CD8-positive, alpha-beta T cell (primary cell): ENCODE measurements at regions of chr17 and their contacts with region 1.

Region 1: DNA sequence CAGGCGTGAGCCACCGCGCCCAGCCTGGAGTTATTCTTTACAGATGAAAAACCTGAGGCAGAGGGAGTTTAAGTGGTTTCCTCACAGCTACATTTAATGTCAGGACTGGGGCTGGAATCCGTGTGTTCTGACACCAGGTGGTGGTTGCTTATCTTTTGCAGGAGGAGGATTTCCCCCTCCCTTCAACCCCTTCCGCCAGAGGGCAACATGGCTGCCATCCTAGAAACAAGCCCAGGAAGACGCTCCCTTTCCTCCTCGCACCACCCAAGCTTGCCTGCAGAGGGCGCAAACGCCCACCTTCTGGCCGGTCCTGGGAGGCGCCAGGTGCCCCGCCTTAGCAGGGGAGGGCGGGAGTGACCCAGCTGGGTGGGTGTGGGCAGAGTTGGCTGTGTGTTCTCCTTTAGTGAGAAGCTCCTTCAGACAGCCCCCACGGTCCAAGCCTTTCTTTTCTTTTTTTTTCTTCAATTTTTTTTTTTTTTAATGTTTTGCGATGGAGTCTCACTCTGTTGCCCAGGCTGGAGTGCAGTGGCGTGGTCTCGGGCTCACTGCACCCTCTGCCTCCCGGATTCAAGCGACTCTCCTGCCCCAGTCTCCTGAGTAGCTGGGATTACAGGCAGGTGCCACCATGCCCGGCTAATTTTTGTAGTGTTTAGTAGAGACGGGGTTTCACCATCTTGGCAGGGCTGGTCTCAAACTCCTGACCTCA is 9.9 kb upstream of the RAP1GAP2 start:
- DNase-seq: peak; percentile 80 to 94 (median 91)
- ATAC-seq: peak; percentile 98
- H3K4me3 ChIP-seq: no peak overlapping the region
- H3K4me3 Mint-ChIP-seq: no peak overlapping the region
- H3K27ac ChIP-seq: no peak overlapping the region
- H3K27ac Mint-ChIP-seq: no peak overlapping the region
- H3K4me1 ChIP-seq: peaks cover 18% of the 10 kb centered on the region
- H3K4me1 Mint-ChIP-seq: peaks cover 10% of the 10 kb centered on the region
- H3K27me3 ChIP-seq: no peaks in the 10 kb centered on the region
- H3K27me3 Mint-ChIP-seq: peaks cover 2% of the 10 kb centered on the region
- CTCF ChIP-seq: peak; percentile 88

Region 2: DNA sequence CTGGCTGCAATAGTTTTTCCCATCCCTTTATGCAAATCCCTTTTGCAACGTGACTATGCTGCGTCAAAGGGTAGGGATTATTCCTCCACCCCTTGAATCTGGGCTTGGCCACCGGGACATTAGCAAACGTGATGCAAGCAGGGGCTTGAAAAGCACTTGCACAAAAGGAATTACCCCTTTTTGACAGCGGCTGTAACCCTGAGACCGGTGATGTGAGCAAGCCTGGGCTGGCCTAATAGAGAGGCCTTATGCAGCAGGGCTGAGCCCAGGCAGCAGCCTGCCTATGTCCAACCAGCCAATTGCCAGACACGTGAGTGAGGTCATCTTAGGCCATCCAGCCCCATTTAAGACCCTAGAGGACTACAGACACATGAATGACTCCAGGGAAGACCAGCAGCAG is 223.3 kb before region 1 on chr17:
- CTCF ChIA-PET with region 1: no interaction called
- POLR2A ChIA-PET with region 1: no interaction called
- intact Hi-C with region 1: no loop called
- DNase-seq: no peak
- ATAC-seq: no peak
- H3K4me3 ChIP-seq: no peak overlapping the region
- H3K4me3 Mint-ChIP-seq: no peak overlapping the region
- H3K27ac ChIP-seq: no peak overlapping the region
- H3K27ac Mint-ChIP-seq: no peak overlapping the region
- H3K4me1 ChIP-seq: peaks cover 7% of the 10 kb centered on the region
- H3K4me1 Mint-ChIP-seq: peaks cover 11% of the 10 kb centered on the region
- H3K27me3 ChIP-seq: no peaks in the 10 kb centered on the region
- H3K27me3 Mint-ChIP-seq: peaks cover 3% of the 10 kb centered on the region
- CTCF ChIP-seq: no peak

Region 3: GRCh38 chr17:2713881-2714280 is 72.4 kb before region 1 on chr17:
- CTCF ChIA-PET with region 1: no interaction called
- POLR2A ChIA-PET with region 1: no interaction called
- intact Hi-C with region 1: no loop called
- DNase-seq: no peak
- ATAC-seq: no peak
- H3K4me3 ChIP-seq: no peak overlapping the region
- H3K4me3 Mint-ChIP-seq: no peak overlapping the region
- H3K27ac ChIP-seq: no peak overlapping the region
- H3K27ac Mint-ChIP-seq: no peak overlapping the region
- H3K4me1 ChIP-seq: peaks cover 29% of the 10 kb centered on the region
- H3K4me1 Mint-ChIP-seq: peaks cover 27% of the 10 kb centered on the region
- H3K27me3 ChIP-seq: no peaks in the 10 kb centered on the region
- H3K27me3 Mint-ChIP-seq: no peaks in the 10 kb centered on the region
- CTCF ChIP-seq: no peak

Region 4: DNA sequence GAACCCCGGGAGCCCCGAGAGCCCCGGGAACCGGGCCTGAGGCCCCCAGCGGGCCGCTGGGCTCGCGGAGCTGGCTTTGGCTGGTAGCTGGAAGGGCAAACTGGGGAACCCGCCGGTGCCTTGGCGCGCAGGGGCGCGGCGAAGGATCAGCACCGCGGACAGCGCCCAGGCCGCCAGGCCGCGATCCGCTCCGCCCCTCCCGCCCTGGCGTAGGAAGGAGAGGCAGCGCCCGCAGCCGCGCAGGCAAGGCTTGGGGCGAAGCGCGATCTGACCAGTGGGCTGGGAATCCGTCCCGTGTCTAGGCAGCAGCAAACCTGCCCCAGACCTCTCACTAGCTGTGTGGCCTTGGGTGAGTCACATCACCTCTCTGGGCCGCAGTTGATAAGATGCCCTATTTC is 36.5 kb before region 1 on chr17:
- CTCF ChIA-PET with region 1: no interaction called
- POLR2A ChIA-PET with region 1: no interaction called
- intact Hi-C with region 1: loop called in 1 of 2 experiments (anchors 2 kb)
- DNase-seq: peak; percentile 55 to 84 (median 65)
- ATAC-seq: peak; percentile 98
- H3K4me3 ChIP-seq: no peak overlapping the region
- H3K4me3 Mint-ChIP-seq: no peak overlapping the region
- H3K27ac ChIP-seq: no peak overlapping the region
- H3K27ac Mint-ChIP-seq: no peak overlapping the region
- H3K4me1 ChIP-seq: no peaks in the 10 kb centered on the region
- H3K4me1 Mint-ChIP-seq: peaks cover 1% of the 10 kb centered on the region
- H3K27me3 ChIP-seq: peaks cover 5 to 7% of the 10 kb centered on the region in 2 experiments
- H3K27me3 Mint-ChIP-seq: peaks cover 47% of the 10 kb centered on the region
- CTCF ChIP-seq: no peak

Region 5: DNA sequence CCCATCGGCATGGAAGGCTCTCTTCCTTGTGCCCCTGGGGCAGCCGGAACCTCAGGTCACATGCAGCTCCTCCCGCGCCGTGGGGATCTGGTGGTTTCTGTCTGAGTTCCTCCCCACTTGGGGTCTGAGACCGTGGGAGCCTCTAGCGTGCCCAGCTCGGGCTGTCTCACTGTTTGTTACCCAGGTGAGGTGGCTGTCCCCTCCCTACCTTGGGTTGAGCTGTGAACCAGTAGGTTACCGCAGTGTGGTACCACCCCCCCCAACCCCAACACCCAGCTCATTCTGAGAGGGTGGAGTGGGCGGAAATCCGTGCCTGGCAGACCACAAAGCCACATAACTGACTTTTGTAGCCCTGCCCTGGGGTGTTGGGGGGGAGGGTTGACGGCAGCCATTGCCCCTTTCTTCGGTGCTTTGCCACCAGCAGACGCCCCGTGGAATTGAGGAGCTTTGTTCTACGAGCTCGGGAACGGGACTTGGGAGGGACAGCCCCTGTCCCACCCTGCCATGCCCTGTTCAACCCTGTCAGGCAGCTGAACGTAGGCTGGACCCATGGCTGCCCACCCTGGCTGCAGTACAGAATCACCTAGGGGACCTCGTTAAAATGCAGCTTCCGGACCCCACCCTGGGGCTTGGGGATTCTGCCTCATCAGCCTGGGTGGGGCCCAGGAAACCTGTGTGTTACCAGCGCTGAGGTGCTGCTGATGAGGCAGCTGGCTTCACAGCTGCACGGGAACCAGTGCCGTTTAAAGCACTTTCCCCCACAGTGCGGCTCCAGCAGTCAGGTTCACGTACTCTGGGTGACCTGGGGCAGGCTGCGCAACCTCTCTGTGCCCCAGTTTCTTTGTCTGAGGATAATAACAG is 28.4 kb after region 1 on chr17:
- CTCF ChIA-PET with region 1: interaction called, 20 read pairs
- POLR2A ChIA-PET with region 1: interaction called, 46 read pairs
- intact Hi-C with region 1: loop called (anchors 1 kb)
- DNase-seq: peak; percentile 88 to 98 (median 96)
- ATAC-seq: peak; percentile 77
- H3K4me3 ChIP-seq: peak overlapping the region; percentile 52 to 64
- H3K4me3 Mint-ChIP-seq: peak overlapping the region; percentile 79
- H3K27ac ChIP-seq: peak overlapping the region; percentile 66 to 76
- H3K27ac Mint-ChIP-seq: peak overlapping the region; percentile 94
- H3K4me1 ChIP-seq: peaks cover 34% of the 10 kb centered on the region
- H3K4me1 Mint-ChIP-seq: peaks cover 31% of the 10 kb centered on the region
- H3K27me3 ChIP-seq: no peaks in the 10 kb centered on the region
- H3K27me3 Mint-ChIP-seq: no peaks in the 10 kb centered on the region
- CTCF ChIP-seq: no peak

Region 6: DNA sequence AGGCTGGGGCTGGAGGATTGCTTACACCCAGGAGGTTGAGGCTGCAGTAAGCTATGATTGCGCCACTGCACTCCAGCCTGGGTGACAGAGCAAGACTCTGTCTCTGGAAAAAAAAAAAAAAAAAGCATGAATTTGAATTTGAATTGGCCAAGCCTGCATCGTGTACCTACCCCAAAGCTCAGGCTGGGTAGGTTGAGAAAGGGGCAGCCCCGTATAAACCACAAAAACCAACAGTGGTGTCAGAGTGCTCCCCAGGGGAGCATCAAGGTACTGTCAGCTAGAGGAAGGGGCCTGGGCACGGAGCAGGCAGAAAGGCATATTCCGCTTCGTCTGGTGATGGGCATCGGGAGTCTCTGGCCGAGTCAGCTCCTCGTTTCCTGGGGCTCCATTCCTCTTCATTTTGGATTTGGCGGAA is 50.8 kb after region 1 on chr17:
- CTCF ChIA-PET with region 1: interaction called, 29 read pairs
- POLR2A ChIA-PET with region 1: interaction called, 5 read pairs
- intact Hi-C with region 1: loop called (anchors 1 kb)
- DNase-seq: peak in 7 of 9 experiments; percentile 12 to 75 (median 50)
- ATAC-seq: peak; percentile 97
- H3K4me3 ChIP-seq: no peak overlapping the region
- H3K4me3 Mint-ChIP-seq: no peak overlapping the region
- H3K27ac ChIP-seq: no peak overlapping the region
- H3K27ac Mint-ChIP-seq: no peak overlapping the region
- H3K4me1 ChIP-seq: peaks cover 6% of the 10 kb centered on the region
- H3K4me1 Mint-ChIP-seq: peaks cover 5% of the 10 kb centered on the region
- H3K27me3 ChIP-seq: no peaks in the 10 kb centered on the region
- H3K27me3 Mint-ChIP-seq: no peaks in the 10 kb centered on the region
- CTCF ChIP-seq: peak; percentile 31

Region 7: DNA sequence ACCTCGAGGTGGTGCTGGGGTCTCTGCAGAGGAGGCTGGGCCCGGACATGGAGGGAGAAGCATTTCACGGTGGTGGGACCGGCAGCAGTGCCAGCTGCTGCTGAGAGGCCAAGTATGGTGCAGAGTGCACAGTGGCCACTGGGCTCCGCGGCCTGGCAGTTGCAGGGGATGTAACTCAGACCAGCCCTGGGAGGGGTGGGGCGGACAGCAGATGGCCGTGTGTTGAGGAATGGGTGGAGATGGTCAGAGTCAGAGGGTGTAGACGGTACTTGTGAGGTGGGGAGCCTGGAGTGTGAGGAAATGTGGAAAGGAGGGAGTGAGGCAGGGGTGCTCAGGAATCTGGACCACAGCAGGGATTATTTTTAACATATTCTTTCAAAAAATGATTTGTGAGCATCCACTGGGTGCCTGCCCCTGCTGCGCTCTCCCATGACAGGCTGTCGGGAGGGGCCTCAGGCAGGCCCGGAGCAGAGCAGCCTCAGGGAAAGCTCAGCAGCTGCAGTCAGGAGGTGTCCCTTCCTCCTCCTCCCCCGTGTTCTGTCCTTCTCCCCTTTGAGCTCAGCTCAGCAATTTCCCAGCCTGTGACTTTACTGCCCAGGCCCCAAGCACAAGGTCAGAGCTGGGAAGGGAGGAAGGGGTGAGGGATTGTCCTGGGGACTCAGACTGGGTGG is 123.0 kb after region 1 on chr17:
- CTCF ChIA-PET with region 1: no interaction called
- POLR2A ChIA-PET with region 1: no interaction called
- intact Hi-C with region 1: no loop called
- DNase-seq: no peak
- ATAC-seq: no peak
- H3K4me3 ChIP-seq: no peak overlapping the region
- H3K4me3 Mint-ChIP-seq: no peak overlapping the region
- H3K27ac ChIP-seq: no peak overlapping the region
- H3K27ac Mint-ChIP-seq: no peak overlapping the region
- H3K4me1 ChIP-seq: no peaks in the 10 kb centered on the region
- H3K4me1 Mint-ChIP-seq: peaks cover 9% of the 10 kb centered on the region
- H3K27me3 ChIP-seq: no peaks in the 10 kb centered on the region
- H3K27me3 Mint-ChIP-seq: no peaks in the 10 kb centered on the region
- CTCF ChIP-seq: no peak

Region 8: DNA sequence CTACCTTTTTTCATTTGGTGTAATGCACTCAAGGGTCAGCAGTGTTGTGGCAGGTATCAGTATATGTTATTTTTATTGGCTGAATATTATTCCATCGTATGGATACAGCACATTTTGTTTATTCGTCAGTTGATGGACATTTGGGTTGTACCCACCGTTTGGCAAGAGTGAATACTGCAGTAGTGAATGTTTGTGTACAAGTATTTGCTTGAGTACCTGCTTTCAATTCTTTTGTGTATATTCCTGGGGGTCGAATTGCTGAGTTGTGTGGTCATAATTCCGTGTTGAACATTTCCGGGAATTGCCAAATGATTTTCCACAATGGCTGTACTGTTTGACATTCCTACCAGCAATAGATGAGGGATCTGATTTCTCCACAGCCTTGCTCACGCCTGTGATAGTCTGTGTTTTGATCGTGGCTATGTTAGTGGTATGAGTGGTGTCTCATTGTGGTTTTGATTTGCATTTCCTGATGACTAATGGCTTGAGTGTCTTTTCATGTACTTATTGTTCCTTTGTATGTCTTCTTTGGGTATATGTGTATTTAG is 168.6 kb after region 1 on chr17:
- CTCF ChIA-PET with region 1: no interaction called
- POLR2A ChIA-PET with region 1: no interaction called
- intact Hi-C with region 1: no loop called
- DNase-seq: peak in 2 of 9 experiments; percentile 36 to 49
- ATAC-seq: no peak
- H3K4me3 ChIP-seq: no peak overlapping the region
- H3K4me3 Mint-ChIP-seq: no peak overlapping the region
- H3K27ac ChIP-seq: no peak overlapping the region
- H3K27ac Mint-ChIP-seq: no peak overlapping the region
- H3K4me1 ChIP-seq: peaks cover 7% of the 10 kb centered on the region
- H3K4me1 Mint-ChIP-seq: peaks cover 14% of the 10 kb centered on the region
- H3K27me3 ChIP-seq: no peaks in the 10 kb centered on the region
- H3K27me3 Mint-ChIP-seq: peaks cover 2% of the 10 kb centered on the region
- CTCF ChIP-seq: no peak

Region 9: DNA sequence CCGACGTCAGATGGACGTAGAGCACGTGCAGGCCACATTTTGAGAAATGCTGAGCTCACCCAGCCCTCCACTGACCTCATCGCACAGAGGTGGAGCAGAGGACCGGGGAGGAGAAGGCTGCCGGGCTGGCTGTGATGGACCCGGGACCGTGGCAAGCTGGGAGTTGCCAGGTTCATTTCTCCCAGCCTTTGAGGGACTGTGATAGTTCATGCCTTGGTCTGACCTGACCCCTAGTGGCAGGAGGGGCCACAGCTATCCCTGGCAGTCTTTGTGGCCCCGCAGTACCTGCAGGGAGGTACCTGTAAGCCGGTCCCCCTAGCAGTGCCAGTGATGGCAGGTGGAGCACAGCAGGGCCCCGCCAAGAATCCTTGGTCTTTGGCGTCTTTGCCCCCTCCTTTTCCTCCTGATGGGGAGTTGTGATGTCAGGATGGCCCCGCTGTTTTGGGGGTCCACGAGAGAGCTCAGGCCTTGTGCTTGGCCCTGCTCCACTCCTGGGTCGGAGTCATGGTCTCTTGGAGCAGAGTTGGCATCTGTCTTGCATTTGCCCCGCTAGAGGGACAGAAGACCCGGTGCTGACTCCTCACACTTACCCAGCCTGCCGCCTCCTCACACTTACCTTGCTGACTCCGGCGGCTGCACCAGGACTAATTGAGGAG is 226.7 kb after region 1 on chr17:
- CTCF ChIA-PET with region 1: interaction called, 27 read pairs
- POLR2A ChIA-PET with region 1: interaction called, 4 read pairs
- intact Hi-C with region 1: loop called in 1 of 2 experiments (anchors 1 kb)
- DNase-seq: peak in 8 of 9 experiments; percentile 28 to 81 (median 60)
- ATAC-seq: peak; percentile 88
- H3K4me3 ChIP-seq: no peak overlapping the region
- H3K4me3 Mint-ChIP-seq: no peak overlapping the region
- H3K27ac ChIP-seq: no peak overlapping the region
- H3K27ac Mint-ChIP-seq: no peak overlapping the region
- H3K4me1 ChIP-seq: no peaks in the 10 kb centered on the region
- H3K4me1 Mint-ChIP-seq: no peaks in the 10 kb centered on the region
- H3K27me3 ChIP-seq: no peaks in the 10 kb centered on the region
- H3K27me3 Mint-ChIP-seq: no peaks in the 10 kb centered on the region
- CTCF ChIP-seq: peak; percentile 71